Calu3 (cell line): ENCODE measurements at regions of chr2 and their contacts with region 1.

Region 1: GRCh38 chr2:201194097-201194496 is 11.2 kb downstream of the CASP10 start:
- DNase-seq: no peak
- H3K4me3 Mint-ChIP-seq: no peak overlapping the region
- H3K27ac Mint-ChIP-seq: no peak overlapping the region
- H3K4me1 Mint-ChIP-seq: no peaks in the 10 kb centered on the region
- H3K27me3 Mint-ChIP-seq: no peaks in the 10 kb centered on the region
- CTCF ChIP-seq: no peak

Region 2: DNA sequence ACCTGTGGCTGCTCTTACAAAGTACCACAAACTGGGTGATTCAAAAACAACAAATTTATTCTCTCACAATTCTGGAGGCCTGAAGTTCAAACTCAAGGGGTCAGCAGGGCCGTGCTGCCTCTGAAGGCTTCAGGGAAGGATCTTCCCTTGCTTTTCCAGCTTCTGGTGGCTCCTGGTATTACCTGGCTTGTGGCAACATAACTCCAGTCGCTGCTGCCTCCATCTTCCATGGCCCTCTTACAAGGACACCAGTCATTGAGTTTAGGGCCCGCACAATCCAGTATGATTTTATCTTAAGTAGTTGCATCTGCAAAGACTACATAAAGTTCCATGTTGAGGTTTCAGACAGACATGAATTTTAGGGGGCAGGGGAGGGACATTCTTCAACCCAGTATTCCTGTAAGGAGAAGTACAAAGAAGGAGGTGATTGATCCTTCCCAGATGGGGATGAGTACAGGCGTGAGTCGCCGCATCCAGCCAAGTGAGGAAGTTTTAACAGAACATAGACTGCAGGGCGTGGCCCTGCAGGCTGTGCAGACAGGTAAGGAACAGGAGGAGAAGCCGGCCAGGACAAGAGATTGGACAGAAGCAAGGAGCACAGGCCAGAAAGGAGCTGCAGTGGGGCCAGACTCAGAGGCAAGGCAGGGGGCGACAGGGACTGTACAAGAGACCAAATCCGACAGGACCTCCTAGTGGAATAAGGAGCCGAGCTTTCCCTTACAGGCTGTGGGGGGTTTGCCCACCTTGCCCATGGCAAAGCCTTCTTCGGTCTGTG is 426.8 kb before region 1 on chr2:
- CTCF ChIA-PET with region 1: no interaction called
- intact Hi-C with region 1: no loop called
- DNase-seq: no peak
- H3K4me3 Mint-ChIP-seq: no peak overlapping the region
- H3K27ac Mint-ChIP-seq: no peak overlapping the region
- H3K4me1 Mint-ChIP-seq: peaks cover 55% of the 10 kb centered on the region
- H3K27me3 Mint-ChIP-seq: no peaks in the 10 kb centered on the region
- CTCF ChIP-seq: no peak

Region 3: GRCh38 chr2:201158111-201158929 is 35.8 kb before region 1 on chr2:
- CTCF ChIA-PET with region 1: no interaction called
- intact Hi-C with region 1: no loop called
- DNase-seq: peak; percentile 78
- H3K4me3 Mint-ChIP-seq: no peak overlapping the region
- H3K27ac Mint-ChIP-seq: peak overlapping the region; percentile 72
- H3K4me1 Mint-ChIP-seq: peaks cover 14% of the 10 kb centered on the region
- H3K27me3 Mint-ChIP-seq: no peaks in the 10 kb centered on the region
- CTCF ChIP-seq: peak; percentile 64

Region 4: GRCh38 chr2:201220102-201220570 is 26.0 kb after region 1 on chr2:
- CTCF ChIA-PET with region 1: interaction called, 6 read pairs
- intact Hi-C with region 1: loop called (anchors 1 kb)
- DNase-seq: peak; percentile 32
- H3K4me3 Mint-ChIP-seq: no peak overlapping the region
- H3K27ac Mint-ChIP-seq: peak overlapping the region; percentile 67
- H3K4me1 Mint-ChIP-seq: peaks cover 22% of the 10 kb centered on the region
- H3K27me3 Mint-ChIP-seq: no peaks in the 10 kb centered on the region
- CTCF ChIP-seq: no peak